Upper lobe of right lung (tissue), 1 donor: ENCODE measurements at regions of chr10 and their contacts with region 1.

Region 1: GRCh38 chr10:121734589-121735045 is 136.4 kb upstream of the FGFR2 start:
- DNase-seq: no peak
- ATAC-seq: peak; percentile 29
- H3K4me3 ChIP-seq: no peak overlapping the region
- H3K27ac ChIP-seq: no peak overlapping the region
- H3K4me1 ChIP-seq: no peaks in the 10 kb centered on the region
- H3K27me3 ChIP-seq: peaks cover 7% of the 10 kb centered on the region
- CTCF ChIP-seq: peak; percentile 72

Region 2: GRCh38 chr10:120931423-120931822 is 803.2 kb before region 1 on chr10:
- intact Hi-C with region 1: loop called (anchors 10 kb)
- DNase-seq: no peak
- ATAC-seq: no peak
- H3K4me3 ChIP-seq: no peak overlapping the region
- H3K27ac ChIP-seq: no peak overlapping the region
- H3K4me1 ChIP-seq: no peaks in the 10 kb centered on the region
- H3K27me3 ChIP-seq: no peaks in the 10 kb centered on the region
- CTCF ChIP-seq: no peak